Activated CD8-positive, alpha-beta T cell treated with anti-CD3 and anti-CD28 coated beads, Interleukin-2, amount 10 ng/mL, durations not matched to agents 7 days and 5 days (primary cell): ENCODE measurements at regions of chr12 and their contacts with region 1.

Region 1: DNA sequence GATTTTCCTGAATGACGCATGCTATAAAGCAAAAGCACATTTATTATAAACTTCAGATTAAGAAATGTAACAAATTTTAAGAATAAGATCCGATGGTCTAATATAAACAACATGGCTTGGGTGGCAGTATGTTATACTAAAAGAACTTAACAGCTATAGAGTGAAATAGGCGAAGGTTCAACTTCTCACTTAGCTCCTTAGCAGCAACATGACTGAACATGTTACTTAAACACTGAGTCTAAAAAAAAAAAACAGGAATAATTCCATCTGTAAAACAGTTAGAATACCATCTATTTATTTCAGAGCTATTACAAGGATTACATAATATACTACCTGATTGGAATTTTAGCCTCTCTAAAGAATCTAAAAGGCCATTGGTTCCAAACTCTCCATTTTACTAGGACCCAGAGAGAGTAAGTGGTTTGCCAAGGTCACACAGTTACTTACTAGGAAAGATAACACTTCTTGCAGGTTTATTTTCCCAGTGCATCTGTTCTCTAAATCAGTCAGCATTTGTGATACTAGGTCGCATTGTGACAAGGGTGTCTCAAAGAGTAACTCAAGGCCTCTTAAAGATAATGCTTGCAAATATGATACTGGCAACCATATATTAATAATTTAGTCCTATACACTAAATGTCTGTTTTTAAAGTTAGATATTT is 14.8 kb downstream of the OSBPL8 start:
- DNase-seq: no peak
- ATAC-seq: no peak
- H3K4me3 Mint-ChIP-seq: no peak overlapping the region
- H3K27ac Mint-ChIP-seq: no peak overlapping the region
- H3K4me1 Mint-ChIP-seq: peaks cover 61% of the 10 kb centered on the region
- H3K27me3 Mint-ChIP-seq: no peaks in the 10 kb centered on the region

Region 2: GRCh38 chr12:76559400-76560085 is 14.8 kb after region 1 on chr12 and contains the start of gene OSBPL8:
- CTCF ChIA-PET with region 1: interaction called, 5 read pairs
- POLR2A ChIA-PET with region 1: interaction called, 14 read pairs
- DNase-seq: peak; percentile 97
- ATAC-seq: peak; percentile 72
- H3K4me3 Mint-ChIP-seq: peak within 1 kb of the TSS; percentile 92
- H3K27ac Mint-ChIP-seq: peak within 1 kb of the TSS; percentile 98
- H3K4me1 Mint-ChIP-seq: peaks cover 43% of the 10 kb centered on the region
- H3K27me3 Mint-ChIP-seq: no peaks in the 10 kb centered on the region
- total RNA-seq, gene OSBPL8: 113 to 119 TPM

Region 3: GRCh38 chr12:76586764-76587395 is 42.1 kb after region 1 on chr12:
- CTCF ChIA-PET with region 1: no interaction called
- POLR2A ChIA-PET with region 1: no interaction called
- DNase-seq: peak; percentile 64
- ATAC-seq: peak; percentile 57
- H3K4me3 Mint-ChIP-seq: no peak overlapping the region
- H3K27ac Mint-ChIP-seq: no peak overlapping the region
- H3K4me1 Mint-ChIP-seq: peaks cover 15% of the 10 kb centered on the region
- H3K27me3 Mint-ChIP-seq: peaks cover 2% of the 10 kb centered on the region